ENCODE measurements at regions of chr1 and their contacts with region 1.

Region 1: GRCh38 chr1:10338047-10338446 is 60.8 kb upstream of the PGD start:
- DNase-seq: no peak
- H3K4me3 ChIP-seq: no peak overlapping the region
- H3K27ac ChIP-seq: no peak overlapping the region
- H3K4me1 ChIP-seq: peaks cover 0 to 13% (median 2%) of the 10 kb centered on the region in 4 donors
- H3K27me3 ChIP-seq: no peaks in the 10 kb centered on the region
- CTCF ChIP-seq: peak; percentile 63 to 82 (median 82)
- EP300 ChIP-seq: no peak
- POLR2A ChIP-seq: no peak

Region 2: GRCh38 chr1:9957726-9958125 is 380.3 kb before region 1 on chr1:
- intact Hi-C with region 1: loop called (anchors 10 kb)
- DNase-seq: no peak
- H3K4me3 ChIP-seq: no peak overlapping the region
- H3K27ac ChIP-seq: no peak overlapping the region
- H3K4me1 ChIP-seq: no peaks in the 10 kb centered on the region
- H3K27me3 ChIP-seq: no peaks in the 10 kb centered on the region
- CTCF ChIP-seq: no peak
- EP300 ChIP-seq: no peak
- POLR2A ChIP-seq: no peak